IMR-90 (cell line): ENCODE measurements at regions of chr10 and their contacts with region 1.

Region 1: GRCh38 chr10:123986742-123987141 is 95.1 kb upstream of the CPXM2 start:
- DNase-seq: no peak
- ATAC-seq: no peak
- H3K4me3 ChIP-seq: no peak overlapping the region
- H3K27ac ChIP-seq: no peak overlapping the region
- H3K4me1 ChIP-seq: no peaks in the 10 kb centered on the region
- H3K27me3 ChIP-seq: no peaks in the 10 kb centered on the region; the same call in 1 of the 2 replicates
- CTCF ChIP-seq: no peak
- POLR2A ChIP-seq: no peak
- RAD21 ChIP-seq: no peak

Region 2: GRCh38 chr10:123485341-123485960 is 501.3 kb before region 1 on chr10:
- CTCF ChIA-PET with region 1: no interaction called
- POLR2A ChIA-PET with region 1: no interaction called
- dilution Hi-C with region 1: no loop called
- in situ Hi-C with region 1: no loop called
- intact Hi-C with region 1: no loop called
- DNase-seq: no peak
- ATAC-seq: no peak
- H3K4me3 ChIP-seq: no peak overlapping the region
- H3K27ac ChIP-seq: no peak overlapping the region
- H3K4me1 ChIP-seq: no peaks in the 10 kb centered on the region
- H3K27me3 ChIP-seq: no peaks in the 10 kb centered on the region
- CTCF ChIP-seq: no peak
- POLR2A ChIP-seq: no peak
- RAD21 ChIP-seq: no peak

Region 3: DNA sequence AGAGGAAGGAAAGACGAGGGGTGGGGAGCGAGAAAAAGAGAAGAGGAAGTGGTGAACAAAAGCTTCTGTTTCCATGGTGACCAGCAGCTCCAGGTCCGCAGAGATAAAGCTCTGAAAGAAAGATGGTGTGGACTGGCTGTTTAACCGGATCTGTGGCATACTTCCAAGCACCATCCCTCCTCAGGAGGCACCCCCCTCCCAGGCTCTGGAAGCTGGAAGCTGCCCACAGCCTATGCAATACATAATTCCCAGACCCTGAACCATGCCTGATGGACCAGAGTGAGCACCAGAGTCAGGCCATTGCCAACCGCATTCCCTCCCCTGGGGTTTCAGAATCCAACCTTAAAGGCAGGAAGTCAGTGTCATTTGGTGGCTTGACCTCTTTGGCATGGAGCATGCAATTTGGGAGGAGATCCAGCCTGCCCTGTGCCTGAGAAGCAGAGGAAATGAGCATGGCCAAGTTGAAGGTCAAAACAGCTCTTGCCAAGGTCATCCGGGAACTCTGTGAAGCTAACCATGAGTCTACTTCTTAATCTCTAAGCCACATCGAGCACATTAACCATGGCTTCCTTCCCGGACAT is 73.0 kb before region 1 on chr10:
- CTCF ChIA-PET with region 1: no interaction called
- POLR2A ChIA-PET with region 1: no interaction called
- dilution Hi-C with region 1: no loop called
- in situ Hi-C with region 1: no loop called
- intact Hi-C with region 1: loop called (anchors 2 kb)
- DNase-seq: no peak
- ATAC-seq: no peak
- H3K4me3 ChIP-seq: no peak overlapping the region
- H3K27ac ChIP-seq: no peak overlapping the region
- H3K4me1 ChIP-seq: no peaks in the 10 kb centered on the region
- H3K27me3 ChIP-seq: no peaks in the 10 kb centered on the region
- CTCF ChIP-seq: no peak
- POLR2A ChIP-seq: no peak
- RAD21 ChIP-seq: no peak